Activated CD4-positive, alpha-beta T cell treated with anti-CD3 and anti-CD28 coated beads, Interleukin-2, amount 10 ng/mL, durations not matched to agents 24 days and 14 days (primary cell): ENCODE measurements at regions of chr17 and their contacts with region 1.

Region 1: GRCh38 chr17:42388381-42389134 is at the start of gene STAT3:
- DNase-seq: peak; percentile 100
- H3K4me3 Mint-ChIP-seq: peak within 1 kb of the TSS; percentile 83
- H3K27ac Mint-ChIP-seq: peak within 1 kb of the TSS; percentile 100
- H3K4me1 Mint-ChIP-seq: peaks cover 46% of the 10 kb centered on the region
- H3K27me3 Mint-ChIP-seq: no peaks in the 10 kb centered on the region
- total RNA-seq, gene STAT3: 252 and 258 TPM in 2 replicates

Region 2: GRCh38 chr17:42276609-42277341 is 111.8 kb before region 1 on chr17:
- intact Hi-C with region 1: loop called (anchors 2 kb)
- DNase-seq: peak; percentile 75
- H3K4me3 Mint-ChIP-seq: peak overlapping the region; percentile 80
- H3K27ac Mint-ChIP-seq: peak overlapping the region; percentile 94
- H3K4me1 Mint-ChIP-seq: peaks cover 41% of the 10 kb centered on the region
- H3K27me3 Mint-ChIP-seq: no peaks in the 10 kb centered on the region

Region 3: DNA sequence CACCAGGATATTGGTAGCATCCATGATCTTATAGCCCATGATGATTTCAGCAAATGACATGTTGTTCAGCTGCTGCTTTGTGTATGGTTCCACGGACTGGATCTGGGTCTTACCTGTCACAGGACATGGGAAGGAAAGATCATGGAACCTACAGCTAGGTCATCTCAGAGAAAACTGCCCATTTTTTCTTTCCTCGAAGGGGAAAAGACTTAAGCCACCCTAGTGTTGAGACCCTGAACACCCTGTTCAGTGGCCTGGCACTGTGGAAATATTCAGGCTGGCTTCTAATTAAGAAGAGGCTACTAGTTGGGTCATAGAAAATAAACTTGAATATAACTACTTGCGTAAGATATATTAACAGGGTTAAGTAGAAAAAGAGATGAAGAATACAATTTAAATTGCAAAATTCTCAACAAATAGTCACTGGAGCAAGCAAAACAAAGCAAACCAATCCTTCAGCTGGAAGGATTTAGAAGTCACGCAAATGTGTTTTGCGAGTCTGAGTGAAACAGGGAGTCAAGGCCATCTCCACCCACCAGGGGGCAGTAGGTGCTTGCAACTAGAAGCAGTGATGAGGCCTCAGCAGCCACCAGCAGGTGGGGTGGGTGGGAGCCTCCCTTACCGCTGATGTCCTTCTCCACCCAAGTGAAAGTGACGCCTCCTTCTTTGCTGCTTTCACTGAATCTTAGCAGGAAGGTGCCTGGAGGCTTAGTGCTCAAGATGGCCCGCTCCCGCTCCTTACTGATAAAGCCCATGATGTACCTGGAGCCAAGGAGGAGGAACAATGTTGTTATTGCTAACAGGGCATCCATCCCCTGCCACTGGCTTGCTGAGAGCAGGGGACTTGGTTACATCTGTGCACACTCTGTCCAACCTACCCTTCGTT is 65.9 kb before region 1 on chr17:
- intact Hi-C with region 1: loop called (anchors 1 kb)
- DNase-seq: peak; percentile 98
- H3K4me3 Mint-ChIP-seq: peak overlapping the region; percentile 39
- H3K27ac Mint-ChIP-seq: peak overlapping the region; percentile 73
- H3K4me1 Mint-ChIP-seq: peaks cover 41% of the 10 kb centered on the region
- H3K27me3 Mint-ChIP-seq: no peaks in the 10 kb centered on the region

Region 4: GRCh38 chr17:42361781-42362186 is 26.8 kb before region 1 on chr17:
- intact Hi-C with region 1: loop called (anchors 1 kb)
- DNase-seq: peak; percentile 76
- H3K4me3 Mint-ChIP-seq: peak overlapping the region; percentile 67
- H3K27ac Mint-ChIP-seq: peak overlapping the region; percentile 92
- H3K4me1 Mint-ChIP-seq: peaks cover 68% of the 10 kb centered on the region
- H3K27me3 Mint-ChIP-seq: no peaks in the 10 kb centered on the region

Region 5: DNA sequence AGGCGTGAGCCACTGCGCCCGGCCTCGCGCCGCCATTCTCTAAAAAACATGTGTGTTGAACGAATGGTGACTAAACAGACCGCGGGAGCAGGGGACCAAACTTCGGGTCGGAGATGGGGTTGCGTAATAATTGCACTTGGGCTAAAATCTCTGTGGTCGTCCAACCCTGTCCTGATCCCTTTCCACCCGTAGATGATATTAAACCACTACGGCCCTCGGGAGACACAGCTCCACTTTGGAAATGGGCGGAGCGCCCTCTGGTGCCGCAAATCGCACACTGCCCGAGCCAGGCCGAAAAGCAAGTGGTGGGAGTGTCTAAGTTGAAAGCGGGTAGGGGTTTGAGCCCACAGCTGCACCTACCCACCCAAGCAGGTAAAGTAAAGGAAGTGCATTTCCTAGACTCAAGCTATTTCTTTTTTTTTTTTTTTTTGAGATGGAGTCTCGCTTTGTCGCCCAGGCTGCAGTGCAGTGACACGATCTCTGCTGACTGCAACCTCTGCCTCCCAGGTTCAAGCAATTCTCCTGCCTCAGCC is 17.5 kb after region 1 on chr17:
- intact Hi-C with region 1: no loop called
- DNase-seq: peak; percentile 95
- H3K4me3 Mint-ChIP-seq: no peak overlapping the region
- H3K27ac Mint-ChIP-seq: no peak overlapping the region
- H3K4me1 Mint-ChIP-seq: peaks cover 21% of the 10 kb centered on the region
- H3K27me3 Mint-ChIP-seq: peaks cover 4% of the 10 kb centered on the region